ENCODE measurements at regions of chr7 and their contacts with region 1.

Region 1: DNA sequence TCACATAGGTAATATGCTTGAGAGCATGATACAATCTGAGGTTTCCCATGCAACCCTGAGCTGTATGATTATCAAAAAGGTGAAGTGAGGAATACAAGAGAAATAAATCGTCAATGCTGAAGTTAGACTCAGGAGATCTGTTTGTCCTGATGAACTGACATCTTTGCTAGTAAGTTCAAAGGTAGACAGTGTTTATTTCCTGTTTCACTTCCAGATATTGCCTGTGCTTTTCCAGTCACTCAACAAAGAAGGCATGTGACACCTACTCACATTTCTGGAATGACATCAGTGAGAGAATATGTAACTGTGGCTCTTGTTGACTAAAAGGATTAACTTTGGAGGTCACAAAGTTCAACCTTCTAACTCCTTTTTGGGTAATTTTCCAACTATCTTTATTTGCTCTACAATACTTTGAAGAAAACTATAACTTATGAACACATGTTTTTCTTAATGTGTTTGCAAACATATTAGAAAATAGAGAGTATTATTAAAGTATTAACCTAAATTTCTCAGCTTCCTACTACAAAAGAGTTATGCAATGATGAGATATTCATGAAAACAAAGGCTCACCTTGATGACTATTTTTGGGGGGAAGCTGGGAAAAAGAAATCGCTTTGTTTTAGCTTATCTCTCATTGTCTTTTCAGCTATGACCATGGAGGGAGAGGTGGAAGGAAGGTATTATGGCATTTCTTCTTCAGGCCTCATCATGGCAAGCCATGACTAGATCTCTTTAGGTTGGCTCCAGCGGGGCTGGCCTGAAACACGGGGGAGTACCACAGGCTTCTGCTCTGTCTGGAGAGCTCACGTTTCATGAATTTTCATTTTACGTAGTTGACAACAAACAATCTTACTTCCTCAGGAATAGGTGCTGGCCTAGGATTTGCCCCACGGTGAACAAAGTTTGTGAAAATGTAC is 214.7 kb upstream of the SLC26A5 start:
- DNase-seq: peak in 1 of 2 experiments; percentile 86
- H3K4me3 ChIP-seq: no peak overlapping the region
- H3K27ac ChIP-seq: peak overlapping the region; percentile 70
- H3K4me1 ChIP-seq: peaks cover 18% of the 10 kb centered on the region
- H3K27me3 ChIP-seq: no peaks in the 10 kb centered on the region
- CTCF ChIP-seq: no peak

Region 2: GRCh38 chr7:103630318-103630717 is 30.4 kb before region 1 on chr7:
- CTCF ChIA-PET with region 1: no interaction called
- POLR2A ChIA-PET with region 1: no interaction called
- intact Hi-C with region 1: loop called (anchors 2 kb)
- DNase-seq: peak; percentile 29 to 51
- H3K4me3 ChIP-seq: no peak overlapping the region
- H3K27ac ChIP-seq: no peak overlapping the region
- H3K4me1 ChIP-seq: peaks cover 23% of the 10 kb centered on the region; the same call in 1 of the 2 replicates
- H3K27me3 ChIP-seq: no peaks in the 10 kb centered on the region
- CTCF ChIP-seq: no peak

Region 3: DNA sequence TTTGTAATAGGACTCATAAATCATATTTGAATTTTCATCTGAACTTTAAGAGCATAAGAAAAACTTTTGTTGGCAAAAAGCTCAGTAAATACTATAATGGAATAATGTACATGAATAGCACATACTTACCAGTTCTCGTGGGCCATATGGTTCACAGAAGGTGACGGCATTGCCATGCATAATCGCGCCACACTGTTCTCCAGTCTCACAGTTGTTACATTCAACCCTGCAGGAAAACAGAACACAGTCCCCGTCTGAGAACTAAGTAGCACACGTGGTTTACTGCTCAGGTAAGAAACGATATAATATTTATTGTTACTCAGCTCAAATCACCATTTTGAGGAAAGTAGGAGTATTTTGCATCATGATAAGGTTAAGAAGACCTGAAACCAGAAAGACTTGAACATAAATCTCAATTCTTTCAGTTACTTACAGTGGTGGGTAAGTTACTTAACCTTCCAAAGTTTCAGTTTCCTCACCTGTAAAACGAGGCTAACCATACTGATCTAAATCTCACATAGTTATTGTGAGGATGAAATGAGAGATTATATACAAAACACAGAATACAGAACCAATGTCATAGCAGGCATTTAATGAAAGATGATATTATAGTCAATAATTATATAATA is 67.4 kb after region 1 on chr7:
- CTCF ChIA-PET with region 1: no interaction called
- POLR2A ChIA-PET with region 1: no interaction called
- intact Hi-C with region 1: loop called (anchors 5 kb)
- DNase-seq: no peak
- H3K4me3 ChIP-seq: no peak overlapping the region
- H3K27ac ChIP-seq: no peak overlapping the region
- H3K4me1 ChIP-seq: no peaks in the 10 kb centered on the region
- H3K27me3 ChIP-seq: no peaks in the 10 kb centered on the region
- CTCF ChIP-seq: no peak